ENCODE measurements at regions of chr7 and their contacts with region 1.

Region 1: GRCh38 chr7:34823640-34824258 is 165.7 kb downstream of the NPSR1 start:
- DNase-seq: peak; percentile 46
- ATAC-seq: peak in 1 of 2 donors; percentile 37

Region 2: GRCh38 chr7:34354899-34355298 is 468.9 kb before region 1 on chr7:
- intact Hi-C with region 1: no loop called
- DNase-seq: no peak
- ATAC-seq: peak; percentile 74 to 88

Region 3: DNA sequence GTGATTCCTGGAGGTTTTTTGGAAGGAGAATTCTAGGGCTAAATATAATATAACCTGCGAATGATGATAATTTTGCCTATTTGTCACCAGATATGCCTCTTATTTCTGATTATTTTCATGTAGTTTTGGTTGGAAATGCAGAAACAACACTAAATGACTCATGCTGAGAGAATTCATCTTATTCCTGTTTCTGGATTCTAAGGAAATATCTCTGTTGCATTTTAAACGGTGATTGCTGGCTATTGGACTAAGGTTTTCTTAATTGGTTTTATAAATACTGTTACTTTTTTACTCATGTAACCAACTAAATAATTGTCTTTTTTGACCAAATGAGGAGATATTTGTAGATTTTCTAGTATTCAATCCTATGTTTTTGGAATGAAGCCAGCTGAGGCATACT is 370.6 kb before region 1 on chr7:
- intact Hi-C with region 1: no loop called
- DNase-seq: no peak
- ATAC-seq: no peak

Region 4: GRCh38 chr7:34928049-34928448 is 104.3 kb after region 1 on chr7:
- intact Hi-C with region 1: loop called in 1 of 2 experiments (anchors 5 kb)
- DNase-seq: peak; percentile 53
- ATAC-seq: peak; percentile 41 to 44

Region 5: GRCh38 chr7:34939175-34939574 is 115.4 kb after region 1 on chr7:
- intact Hi-C with region 1: no loop called
- DNase-seq: no peak
- ATAC-seq: no peak

Region 6: DNA sequence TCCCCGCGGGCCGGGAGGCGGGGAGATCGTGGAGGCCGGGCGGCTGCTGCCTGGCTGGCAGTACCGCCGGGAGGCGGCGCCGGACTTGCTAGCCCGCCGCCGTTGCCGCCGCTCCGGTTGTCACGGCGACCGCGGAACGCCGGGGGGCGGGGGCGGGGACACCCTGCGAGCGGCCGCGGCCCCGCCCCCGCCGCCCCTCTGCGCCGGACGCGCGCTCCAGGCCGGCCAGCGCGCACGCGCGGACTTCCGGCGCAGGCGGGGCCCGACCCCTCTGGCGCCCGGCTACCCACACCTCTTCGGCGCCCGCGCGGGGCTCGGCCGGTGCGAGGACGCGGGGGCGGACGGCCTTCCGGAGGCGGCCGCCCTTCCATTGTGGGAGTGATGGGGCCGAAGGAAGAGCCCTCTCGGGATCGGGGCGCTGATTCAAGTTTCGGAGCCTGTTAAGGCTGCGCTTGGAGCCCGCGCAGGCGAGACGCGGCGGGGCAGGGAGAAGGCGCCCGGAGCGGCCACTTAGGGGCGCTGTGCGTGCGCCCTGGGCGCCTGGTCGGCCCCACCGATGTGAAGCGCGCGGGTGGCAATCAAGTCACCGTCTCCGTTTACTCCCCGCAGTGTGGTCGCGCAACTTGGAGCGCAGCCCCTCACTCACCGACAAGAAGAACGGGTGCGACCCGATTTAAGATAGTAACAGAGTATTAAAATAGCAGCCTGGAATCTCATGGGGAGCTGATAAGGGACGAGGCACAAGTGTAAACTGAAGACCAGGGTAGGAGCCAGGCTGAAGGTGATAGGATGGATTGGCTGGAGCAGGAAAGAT is 214.0 kb after region 1 on chr7:
- intact Hi-C with region 1: loop called in 1 of 2 experiments (anchors 10 kb)
- DNase-seq: peak; percentile 96
- ATAC-seq: peak; percentile 93 to 95

Region 7: GRCh38 chr7:35482241-35482640 is 658.5 kb after region 1 on chr7:
- intact Hi-C with region 1: no loop called
- DNase-seq: no peak
- ATAC-seq: no peak

Region 8: GRCh38 chr7:35537067-35538023 is 713.6 kb after region 1 on chr7:
- intact Hi-C with region 1: loop called in 1 of 2 experiments (anchors 10 kb)
- DNase-seq: peak; percentile 84
- ATAC-seq: peak; percentile 96 to 98